Posterior vena cava (tissue), 2 donors: ENCODE measurements at regions of chr10 and their contacts with region 1.

Region 1: DNA sequence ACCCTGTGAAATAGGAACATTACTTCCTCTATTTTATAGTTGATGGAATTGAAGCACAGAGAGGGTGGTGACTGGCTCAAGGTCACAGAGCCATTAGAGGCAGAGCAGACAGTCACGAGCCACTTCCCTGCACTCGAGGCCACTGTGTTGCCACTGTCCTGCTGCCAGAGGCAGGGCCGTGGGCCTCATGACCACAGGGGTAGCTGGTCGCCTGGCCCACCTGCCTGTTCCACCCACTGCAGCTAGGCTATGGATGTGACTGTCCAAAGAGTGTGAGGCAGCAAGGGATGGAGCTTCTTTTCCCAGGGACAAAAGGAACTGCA is 38.2 kb downstream of the RPS24 start:
- DNase-seq: peak; percentile 46

Region 2: DNA sequence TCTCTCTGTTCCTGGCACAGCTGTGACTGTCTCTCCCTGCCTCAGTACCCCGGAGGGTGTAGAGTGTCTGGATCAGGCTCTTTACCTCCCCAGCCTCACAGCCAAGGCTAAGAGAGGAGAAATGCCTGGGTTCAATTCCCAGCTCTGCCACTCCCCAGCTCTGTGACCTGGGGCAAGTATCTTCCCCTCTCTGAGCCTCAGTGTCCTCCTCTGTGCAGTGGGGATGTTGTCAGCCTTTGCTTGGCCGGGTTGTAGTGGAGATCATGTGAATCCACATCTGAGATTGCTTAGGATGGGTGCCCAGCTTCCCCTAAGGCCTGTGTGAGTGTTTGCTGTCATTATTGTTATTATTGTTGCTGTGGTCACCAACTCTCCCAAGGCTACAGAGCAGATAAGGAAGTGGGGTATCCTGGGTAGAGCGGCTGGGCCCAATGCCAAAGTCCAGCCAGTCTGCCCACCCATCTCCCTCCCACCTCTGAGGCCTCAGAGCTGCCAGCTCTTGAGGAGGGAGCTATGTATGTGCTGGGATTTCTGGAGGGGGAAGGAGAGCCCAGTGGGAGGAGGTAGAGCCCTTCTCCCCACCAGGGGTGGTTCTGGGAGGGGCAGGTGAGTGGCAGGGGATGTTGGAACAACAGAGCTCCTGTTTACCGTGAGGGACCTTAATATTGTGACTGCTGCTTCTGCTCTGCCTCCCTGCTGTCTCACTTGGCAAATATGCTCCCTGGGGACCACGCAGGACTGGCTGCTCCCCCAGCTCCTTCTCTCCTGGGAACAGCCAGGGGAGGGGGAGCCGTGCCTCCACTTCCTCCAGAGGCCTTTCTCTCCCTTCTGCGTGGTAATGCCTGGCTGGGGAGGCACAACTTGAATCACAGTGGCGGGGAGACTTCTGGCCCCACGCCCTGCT is 132.3 kb after region 1 on chr10:
- intact Hi-C with region 1: loop called in 1 of 2 experiments (anchors 2 kb)
- DNase-seq: no peak

Region 3: DNA sequence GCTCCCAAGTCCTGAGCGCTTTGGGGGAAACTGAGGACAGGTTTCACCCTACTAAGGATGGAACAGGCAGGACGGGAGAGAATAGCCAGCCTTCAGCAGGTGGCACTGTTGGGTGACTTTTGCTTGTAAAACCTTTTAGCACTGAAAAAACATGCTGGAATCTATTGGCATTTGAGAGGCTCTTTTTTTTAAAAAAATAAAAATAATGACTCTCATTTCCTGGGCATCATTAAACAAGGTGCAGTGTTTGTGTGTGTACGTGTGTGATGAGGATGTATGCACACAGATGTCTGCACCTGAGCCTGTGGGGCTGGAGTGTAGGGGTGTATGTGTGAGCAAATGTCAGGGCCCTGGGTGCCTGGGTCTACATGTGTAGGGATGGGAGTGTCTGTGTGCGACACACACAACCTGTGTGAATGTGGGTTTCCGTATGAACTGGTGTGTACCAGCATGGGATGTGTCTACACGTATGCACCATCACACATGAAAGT is 139.8 kb after region 1 on chr10:
- intact Hi-C with region 1: loop called in 1 of 2 experiments (anchors 1 kb)
- DNase-seq: peak; percentile 67